Posterior cingulate gyrus (tissue), 11 donors: ENCODE measurements at regions of chr7 and their contacts with region 1.

Region 1: GRCh38 chr7:66844552-66845378 is 76.3 kb upstream of the TMEM248 start:
- DNase-seq: peak; percentile 95 to 100 (median 98)

Region 2: GRCh38 chr7:66634816-66635215 is 209.9 kb before region 1 on chr7:
- intact Hi-C with region 1: loop called (anchors 5 kb)
- DNase-seq: no peak

Region 3: GRCh38 chr7:66697449-66698438 is 147.0 kb before region 1 on chr7:
- intact Hi-C with region 1: no loop called
- DNase-seq: peak; percentile 43 to 94 (median 72)

Region 4: GRCh38 chr7:66920769-66921395 is 76.1 kb after region 1 on chr7 and contains the start of gene TMEM248:
- intact Hi-C with region 1: loop called (anchors 5 kb)
- DNase-seq: peak; percentile 80 to 99 (median 88)